Mammary epithelial cell (primary cell): ENCODE measurements at regions of chr4 and their contacts with region 1.

Region 1: DNA sequence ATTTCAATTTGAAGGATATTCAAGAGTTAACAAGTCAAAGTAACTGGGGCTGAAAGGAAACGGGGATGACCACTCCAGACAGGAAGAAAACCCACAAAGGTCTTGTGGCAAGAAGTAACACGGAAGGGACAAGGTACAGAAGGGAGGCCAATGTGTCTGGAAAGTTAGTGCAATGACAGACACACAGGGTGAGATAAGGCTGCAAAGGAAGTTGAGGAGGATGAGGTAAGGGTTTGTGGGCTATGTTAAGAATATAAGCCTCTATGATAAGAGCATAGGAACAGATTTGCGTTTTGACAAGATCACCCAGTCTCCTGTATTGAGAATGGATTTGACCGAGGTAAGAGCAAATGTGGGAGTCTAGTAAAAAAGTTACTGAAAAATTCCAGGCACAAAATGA is 21.9 kb upstream of the EMCN start:
- DNase-seq: no peak
- H3K4me3 ChIP-seq: no peak overlapping the region
- H3K27ac ChIP-seq: no peak overlapping the region
- H3K4me1 ChIP-seq: no peaks in the 10 kb centered on the region
- H3K27me3 ChIP-seq: peaks cover 4% of the 10 kb centered on the region
- CTCF ChIP-seq: no peak

Region 2: GRCh38 chr4:100657187-100657586 is 117.5 kb after region 1 on chr4:
- CTCF ChIA-PET with region 1: no interaction called
- dilution Hi-C with region 1: no loop called
- in situ Hi-C with region 1: no loop called
- intact Hi-C with region 1: loop called (anchors 10 kb)
- DNase-seq: peak; percentile 27
- H3K4me3 ChIP-seq: no peak overlapping the region
- H3K27ac ChIP-seq: no peak overlapping the region
- H3K4me1 ChIP-seq: peaks cover 3% of the 10 kb centered on the region
- H3K27me3 ChIP-seq: no peaks in the 10 kb centered on the region
- CTCF ChIP-seq: no peak

Region 3: DNA sequence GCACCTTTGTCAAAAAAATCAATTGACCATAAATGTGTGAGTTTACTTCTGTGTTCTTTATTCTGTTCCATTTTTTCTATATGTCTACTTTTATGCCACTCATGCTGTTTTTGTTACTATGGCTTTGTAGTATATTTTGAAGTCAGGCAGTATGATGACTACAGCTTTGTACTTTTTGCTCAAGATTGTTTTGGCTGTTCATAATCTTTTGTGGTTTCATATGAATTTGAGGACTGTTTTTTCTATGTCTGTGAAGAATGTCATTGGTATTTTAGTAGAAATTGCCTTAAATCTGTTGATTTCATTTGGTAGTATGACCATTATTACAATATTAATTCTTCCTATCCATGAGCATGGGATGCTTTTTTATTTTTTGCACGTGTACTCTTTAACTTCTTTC is 460.8 kb after region 1 on chr4:
- CTCF ChIA-PET with region 1: no interaction called
- dilution Hi-C with region 1: no loop called
- in situ Hi-C with region 1: no loop called
- intact Hi-C with region 1: no loop called
- DNase-seq: no peak
- H3K4me3 ChIP-seq: no peak overlapping the region
- H3K27ac ChIP-seq: no peak overlapping the region
- H3K4me1 ChIP-seq: no peaks in the 10 kb centered on the region
- H3K27me3 ChIP-seq: no peaks in the 10 kb centered on the region
- CTCF ChIP-seq: no peak